ENCODE measurements at regions of chr13 and their contacts with region 1.

Region 1: DNA sequence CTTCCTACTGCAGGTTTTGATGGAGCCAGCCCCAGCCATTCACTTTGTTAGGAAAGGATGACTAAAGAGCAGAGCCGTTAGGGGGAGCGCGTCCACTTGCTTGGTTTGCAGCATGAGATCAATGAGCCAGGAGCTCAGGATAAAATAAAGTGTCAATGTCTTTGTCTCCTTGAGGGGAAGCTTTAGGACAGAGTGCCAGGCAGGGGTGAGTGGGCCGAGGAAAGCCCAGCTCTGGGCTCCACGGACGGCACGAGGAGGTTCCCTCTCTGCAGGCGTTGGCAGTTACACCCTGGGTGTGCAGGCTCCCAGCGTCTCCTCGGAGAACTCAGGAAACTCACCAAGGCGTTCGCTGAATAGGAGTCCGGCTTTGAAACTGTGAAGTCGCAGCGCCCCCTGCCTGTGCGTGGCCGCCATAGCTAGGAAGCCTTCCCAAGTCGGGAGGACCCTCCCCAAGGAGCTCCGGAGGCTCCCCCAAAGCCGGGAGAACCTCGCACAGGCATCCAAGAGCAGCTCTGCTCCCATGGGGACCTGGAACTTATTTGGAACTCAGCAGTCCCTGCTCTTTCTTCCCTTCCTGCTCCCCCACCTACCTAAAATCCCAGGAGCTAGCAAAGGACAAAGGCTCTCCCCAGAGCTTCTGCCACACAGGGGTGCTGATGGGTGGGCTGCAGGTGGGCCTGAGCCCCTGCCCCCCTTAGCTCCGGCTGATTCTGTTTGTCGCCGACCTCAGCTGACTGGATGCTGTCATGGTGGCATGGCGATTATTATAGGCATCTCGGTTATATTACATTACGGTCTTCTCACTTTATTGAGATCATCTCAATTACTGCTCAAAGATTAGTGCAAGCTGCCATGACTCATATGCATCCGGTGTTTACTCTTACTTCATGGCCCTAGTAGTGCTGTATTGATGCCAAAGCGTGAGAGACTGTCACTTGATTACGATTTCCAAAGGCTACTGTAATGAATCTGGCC is 34.4 kb downstream of the GSX1 start:
- DNase-seq: peak; percentile 80
- ATAC-seq: peak; percentile 91 to 96

Region 2: DNA sequence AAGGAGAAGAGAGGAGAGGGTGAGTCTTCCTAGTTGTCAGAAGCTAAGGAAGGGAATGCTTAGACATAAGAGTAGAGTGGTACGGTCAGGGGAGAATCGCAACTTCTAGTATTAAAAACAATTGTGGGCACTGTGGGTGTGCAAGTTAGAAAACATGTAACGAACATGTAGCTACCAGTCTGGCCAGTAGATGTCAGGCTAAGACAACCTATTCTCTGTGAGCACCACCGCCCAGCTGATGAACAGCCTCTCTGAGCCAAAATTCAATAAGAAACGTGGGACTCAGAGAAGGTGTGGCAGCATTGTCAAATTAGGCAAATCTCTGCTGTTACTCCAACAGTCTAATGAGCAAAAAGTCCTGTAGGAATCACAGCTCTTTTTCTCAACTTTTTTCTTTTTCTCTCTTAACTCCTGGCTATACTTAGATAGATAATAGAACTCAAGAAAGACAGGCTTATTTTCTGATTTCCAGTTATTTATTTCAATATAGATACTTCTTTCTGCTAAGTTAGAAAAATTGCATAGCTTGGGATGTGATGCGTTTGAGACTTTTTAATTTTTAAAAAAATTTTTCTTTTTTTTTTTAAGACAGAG is 841.3 kb before region 1 on chr13:
- intact Hi-C with region 1: loop called in 1 of 2 experiments (anchors 5 kb)
- DNase-seq: peak; percentile 61
- ATAC-seq: peak; percentile 68 to 74

Region 3: DNA sequence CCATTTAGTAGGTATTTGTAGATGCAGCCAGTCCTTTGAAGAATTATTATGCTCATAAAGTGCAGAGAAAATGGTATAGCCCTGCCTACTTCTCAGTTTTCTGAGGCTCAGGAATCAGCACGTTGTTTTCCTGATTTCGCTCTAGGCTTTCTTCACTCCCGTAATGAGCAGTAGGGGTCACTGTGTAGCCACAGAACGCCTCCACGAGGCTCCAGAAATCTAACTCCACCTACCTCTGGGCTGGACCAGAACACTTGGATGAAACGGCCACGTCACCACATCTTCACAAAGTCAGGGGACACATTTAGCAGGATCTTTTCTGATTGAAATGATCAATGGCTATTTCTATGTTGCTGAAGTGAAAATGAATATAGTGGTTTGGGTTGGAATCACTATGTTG is 452.0 kb before region 1 on chr13:
- intact Hi-C with region 1: loop called (anchors 2 to 5 kb)
- DNase-seq: peak; percentile 69
- ATAC-seq: peak; percentile 96 to 98

Region 4: GRCh38 chr13:27533155-27533643 is 293.5 kb before region 1 on chr13:
- intact Hi-C with region 1: loop called (anchors 5 to 10 kb)
- DNase-seq: peak; percentile 88
- ATAC-seq: peak; percentile 99

Region 5: GRCh38 chr13:27896726-27897125 is 70.1 kb after region 1 on chr13:
- intact Hi-C with region 1: no loop called
- DNase-seq: no peak
- ATAC-seq: no peak

Region 6: DNA sequence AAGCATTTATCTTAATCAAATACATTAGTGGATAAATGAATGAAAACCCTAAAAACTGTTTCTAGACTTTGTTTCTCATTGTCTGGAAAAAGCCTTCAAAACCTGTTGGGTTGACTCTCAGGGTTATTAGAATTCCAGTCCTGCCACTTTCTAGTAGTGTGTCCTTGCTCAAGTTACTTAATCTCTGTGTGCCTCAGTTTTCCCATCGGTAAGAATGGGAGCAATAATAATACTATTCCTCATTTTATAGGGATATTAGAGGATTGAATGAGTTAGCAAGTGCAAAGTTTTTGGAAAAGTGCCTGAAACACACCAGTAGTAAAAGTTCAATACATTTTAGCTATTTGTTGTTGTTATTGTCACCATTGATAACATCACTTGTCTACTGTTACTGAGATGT is 158.9 kb after region 1 on chr13:
- intact Hi-C with region 1: loop called in 1 of 2 experiments (anchors 2 kb)
- DNase-seq: no peak
- ATAC-seq: no peak

Measured in left cardiac atrium (tissue), 4 donors.